Ovary (tissue), 10 donors: ENCODE measurements at regions of chr17 and their contacts with region 1.

Region 1: DNA sequence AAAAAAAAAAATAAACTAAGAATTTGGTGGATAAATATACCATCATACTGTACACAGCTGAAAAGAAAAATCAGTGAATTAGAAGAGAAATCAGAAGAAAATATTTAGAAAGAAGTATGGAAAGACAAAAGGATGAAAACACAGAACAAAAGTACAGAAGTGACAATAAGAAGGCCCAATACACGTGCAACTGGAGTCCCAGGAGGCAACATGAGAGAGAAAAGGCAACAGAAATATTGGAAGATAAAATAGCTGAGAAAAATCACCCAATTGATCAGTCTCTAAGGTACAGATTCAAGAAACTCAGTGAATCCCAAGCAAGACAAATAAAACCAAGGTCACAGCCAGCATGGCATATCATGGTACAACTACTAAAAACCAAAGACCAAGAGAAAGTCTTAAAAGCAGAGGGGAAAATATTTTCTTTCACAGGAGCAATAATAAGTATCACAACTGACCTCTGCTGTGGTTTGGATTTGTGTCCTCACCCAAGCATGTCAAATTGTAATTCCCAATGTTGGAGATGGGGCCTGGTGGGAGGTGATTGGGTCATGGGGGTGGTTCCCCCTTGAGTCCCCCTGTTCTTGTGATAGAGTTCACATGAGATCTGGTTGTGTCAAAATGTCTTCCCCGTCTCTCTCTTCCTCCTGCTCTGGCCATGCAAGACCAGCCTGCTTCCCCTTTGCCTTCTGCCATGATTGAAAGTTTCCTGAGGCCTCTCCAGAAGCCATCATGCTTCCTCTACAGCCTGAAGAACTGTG is 20.2 kb upstream of the ENGASE start:
- DNase-seq: no peak
- H3K4me3 ChIP-seq: no peak overlapping the region
- H3K27ac ChIP-seq: no peak overlapping the region
- H3K4me1 ChIP-seq: no peaks in the 10 kb centered on the region
- H3K27me3 ChIP-seq: no peaks in the 10 kb centered on the region
- CTCF ChIP-seq: no peak
- EP300 ChIP-seq: no peak
- POLR2A ChIP-seq: no peak

Region 2: GRCh38 chr17:78993241-78993956 is 61.0 kb before region 1 on chr17:
- intact Hi-C with region 1: no loop called
- DNase-seq: peak; percentile 64 to 80 (median 78)
- H3K4me3 ChIP-seq: no peak overlapping the region
- H3K27ac ChIP-seq: peak overlapping the region in 1 of 2 donors; percentile 18
- H3K4me1 ChIP-seq: peaks cover 3% of the 10 kb centered on the region
- H3K27me3 ChIP-seq: no peaks in the 10 kb centered on the region
- CTCF ChIP-seq: peak; percentile 65 to 76 (median 70)
- EP300 ChIP-seq: no peak
- POLR2A ChIP-seq: no peak

Region 3: GRCh38 chr17:79075861-79076406 is 21.6 kb after region 1 on chr17:
- intact Hi-C with region 1: loop called in 1 of 4 experiments (anchors 2 kb)
- DNase-seq: peak in 1 of 5 donors; percentile 28
- H3K4me3 ChIP-seq: peak overlapping the region; percentile 81
- H3K27ac ChIP-seq: peak overlapping the region; percentile 83 to 93
- H3K4me1 ChIP-seq: peaks cover 2% of the 10 kb centered on the region
- H3K27me3 ChIP-seq: no peaks in the 10 kb centered on the region
- CTCF ChIP-seq: no peak
- EP300 ChIP-seq: no peak
- POLR2A ChIP-seq: no peak